ENCODE measurements at regions of chr1 and their contacts with region 1.

Region 1: GRCh38 chr1:47262787-47263413 is 30.9 kb upstream of the TAL1 start:
- DNase-seq: peak; percentile 32 to 40
- H3K4me3 ChIP-seq: no peak overlapping the region
- H3K27ac ChIP-seq: no peak overlapping the region
- H3K4me1 ChIP-seq: no peaks in the 10 kb centered on the region
- H3K27me3 ChIP-seq: no peaks in the 10 kb centered on the region
- CTCF ChIP-seq: peak; percentile 81

Region 2: GRCh38 chr1:46991083-46991923 is 271.6 kb before region 1 on chr1:
- CTCF ChIA-PET with region 1: no interaction called
- POLR2A ChIA-PET with region 1: no interaction called
- intact Hi-C with region 1: no loop called
- DNase-seq: no peak
- H3K4me3 ChIP-seq: no peak overlapping the region
- H3K27ac ChIP-seq: no peak overlapping the region
- H3K4me1 ChIP-seq: no peaks in the 10 kb centered on the region
- H3K27me3 ChIP-seq: no peaks in the 10 kb centered on the region; the same call in 1 of the 2 replicates
- CTCF ChIP-seq: peak; percentile 48

Region 3: DNA sequence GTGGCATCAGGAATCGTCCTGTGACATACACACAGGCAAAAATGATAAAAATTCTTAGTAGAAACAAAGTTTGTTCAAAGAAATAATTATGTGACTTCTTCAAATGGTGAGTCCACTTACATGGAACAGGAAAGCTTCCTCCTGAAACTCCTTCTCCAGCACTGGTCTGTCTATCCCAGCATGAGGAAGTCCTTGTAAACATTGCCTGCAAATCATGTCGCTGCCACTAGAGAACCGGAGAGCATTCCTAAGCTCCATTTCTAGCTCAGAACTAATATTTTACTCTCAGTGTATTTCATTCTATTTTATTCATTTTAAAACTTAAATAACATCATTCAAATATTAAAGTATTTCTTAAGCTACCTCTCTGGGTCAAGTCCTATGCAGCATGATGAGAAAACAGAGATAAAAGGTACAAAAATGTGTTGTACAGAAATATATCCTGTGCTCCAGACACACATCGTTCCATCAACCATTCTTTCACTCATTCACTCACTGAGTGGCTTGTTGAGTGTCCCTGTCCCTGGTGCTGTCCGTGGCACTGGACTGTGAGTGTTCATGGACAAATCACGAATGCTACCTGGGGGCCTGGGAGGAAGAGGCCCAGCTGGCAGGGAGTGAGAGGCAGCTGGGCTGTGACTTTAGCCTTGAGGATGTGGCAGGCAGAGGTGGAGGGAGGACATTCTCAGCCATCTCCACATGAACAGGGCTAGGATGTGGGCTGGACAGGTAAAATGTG is 115.7 kb before region 1 on chr1:
- CTCF ChIA-PET with region 1: no interaction called
- POLR2A ChIA-PET with region 1: no interaction called
- intact Hi-C with region 1: no loop called
- DNase-seq: no peak
- H3K4me3 ChIP-seq: no peak overlapping the region
- H3K27ac ChIP-seq: no peak overlapping the region
- H3K4me1 ChIP-seq: no peaks in the 10 kb centered on the region
- H3K27me3 ChIP-seq: no peaks in the 10 kb centered on the region
- CTCF ChIP-seq: no peak

Region 4: GRCh38 chr1:47192458-47193384 is 70.2 kb before region 1 on chr1:
- CTCF ChIA-PET with region 1: interaction called, 12 read pairs
- POLR2A ChIA-PET with region 1: no interaction called
- intact Hi-C with region 1: loop called (anchors 1 kb)
- DNase-seq: peak; percentile 57 to 69
- H3K4me3 ChIP-seq: no peak overlapping the region
- H3K27ac ChIP-seq: no peak overlapping the region
- H3K4me1 ChIP-seq: no peaks in the 10 kb centered on the region
- H3K27me3 ChIP-seq: no peaks in the 10 kb centered on the region
- CTCF ChIP-seq: peak; percentile 95

Region 5: DNA sequence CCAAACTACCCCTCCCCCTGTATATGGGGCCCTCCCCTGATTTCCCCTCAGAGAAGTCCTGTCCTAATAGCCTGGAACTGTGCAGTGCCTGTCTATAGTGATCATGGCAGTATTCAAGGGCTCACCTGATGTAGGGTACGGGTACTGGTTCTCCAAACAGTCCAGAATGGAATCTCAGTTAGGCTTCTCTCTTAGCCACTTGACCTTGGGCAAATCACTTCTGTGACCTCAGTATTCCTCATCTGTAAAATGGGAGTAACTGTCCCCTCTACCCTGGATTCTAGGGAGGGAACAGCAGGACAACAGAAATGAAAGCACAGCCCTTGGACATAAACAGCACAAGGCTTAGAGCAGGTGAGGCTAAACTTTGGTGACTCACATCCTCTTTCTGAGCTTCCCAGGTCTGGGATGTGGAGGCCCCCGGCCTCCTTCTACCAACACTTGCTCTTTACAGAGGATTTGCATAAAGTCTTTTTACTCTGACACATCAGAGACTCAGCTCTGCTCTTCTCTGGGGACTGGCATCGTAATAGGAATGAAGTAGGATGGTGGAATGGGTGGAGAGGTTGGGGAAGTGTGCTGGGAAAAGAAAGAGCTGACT is 53.1 kb before region 1 on chr1:
- CTCF ChIA-PET with region 1: no interaction called
- POLR2A ChIA-PET with region 1: interaction called, 14 read pairs
- intact Hi-C with region 1: no loop called
- DNase-seq: no peak
- H3K4me3 ChIP-seq: no peak overlapping the region
- H3K27ac ChIP-seq: no peak overlapping the region
- H3K4me1 ChIP-seq: no peaks in the 10 kb centered on the region
- H3K27me3 ChIP-seq: no peaks in the 10 kb centered on the region
- CTCF ChIP-seq: no peak

Region 6: DNA sequence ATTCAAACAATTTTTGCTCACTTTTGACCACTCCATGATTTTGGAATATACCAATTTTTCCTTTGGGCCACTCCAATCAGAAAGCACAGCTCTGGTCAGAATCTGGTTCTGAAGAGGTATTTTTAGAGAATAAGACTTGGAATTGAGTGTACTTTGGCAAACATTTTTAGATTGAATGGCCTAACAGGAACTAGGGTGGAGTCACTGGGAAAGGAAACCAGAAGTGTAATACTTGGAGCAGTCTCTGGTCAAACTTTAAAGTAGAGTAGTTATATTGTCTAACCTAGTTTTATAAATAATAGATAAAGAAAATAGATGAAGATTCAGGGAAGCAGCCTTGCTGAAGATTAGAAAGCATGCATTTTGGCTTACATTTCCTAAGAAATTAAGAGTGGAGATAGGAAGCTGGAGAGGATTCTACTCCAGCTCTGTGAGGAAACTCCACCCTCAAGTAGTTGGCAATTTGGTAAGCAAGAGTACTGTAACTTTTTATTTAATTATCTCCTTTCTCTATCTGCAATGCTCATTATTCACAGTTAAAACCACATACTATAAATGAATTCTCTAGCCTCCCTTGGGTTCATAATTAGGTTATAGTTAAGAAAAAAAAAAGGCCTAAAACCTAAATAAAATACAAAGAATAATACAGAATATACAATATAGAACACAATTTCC is 35.3 kb after region 1 on chr1:
- CTCF ChIA-PET with region 1: no interaction called
- POLR2A ChIA-PET with region 1: no interaction called
- intact Hi-C with region 1: loop called (anchors 5 kb)
- DNase-seq: no peak
- H3K4me3 ChIP-seq: no peak overlapping the region
- H3K27ac ChIP-seq: no peak overlapping the region
- H3K4me1 ChIP-seq: no peaks in the 10 kb centered on the region
- H3K27me3 ChIP-seq: no peaks in the 10 kb centered on the region
- CTCF ChIP-seq: no peak